ENCODE measurements at regions of chrX and their contacts with region 1.

Region 1: GRCh38 chrX:13254076-13254785 is 65.6 kb downstream of the ATXN3L start:
- DNase-seq: no peak
- H3K4me3 Mint-ChIP-seq: peak overlapping the region; percentile 3
- H3K27ac Mint-ChIP-seq: peak overlapping the region; percentile 14
- H3K4me1 Mint-ChIP-seq: peaks cover 59% of the 10 kb centered on the region
- H3K27me3 Mint-ChIP-seq: no peaks in the 10 kb centered on the region

Region 2: DNA sequence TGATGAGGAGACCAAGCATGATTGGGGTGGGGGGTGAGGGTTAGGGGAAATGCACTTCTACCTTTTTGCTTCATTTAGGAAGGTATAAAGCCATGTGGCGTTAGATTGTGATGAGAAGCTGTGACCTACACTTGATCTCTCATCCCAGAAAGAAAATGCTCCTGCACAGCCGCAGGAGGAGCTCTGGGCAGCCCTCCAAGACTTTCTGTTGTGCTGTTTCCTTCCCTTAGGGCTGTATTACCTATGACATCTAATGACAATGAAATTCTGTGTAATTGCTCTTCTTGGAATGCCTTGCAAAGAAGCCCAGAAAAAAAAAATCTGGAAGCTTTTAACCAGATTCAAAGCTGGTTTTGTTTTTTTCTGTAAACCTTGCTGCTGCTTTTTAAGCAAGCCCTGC is 449.6 kb before region 1 on chrX:
- intact Hi-C with region 1: no loop called
- DNase-seq: no peak
- H3K4me3 Mint-ChIP-seq: no peak overlapping the region
- H3K27ac Mint-ChIP-seq: no peak overlapping the region
- H3K4me1 Mint-ChIP-seq: peaks cover 17% of the 10 kb centered on the region
- H3K27me3 Mint-ChIP-seq: no peaks in the 10 kb centered on the region

Region 3: GRCh38 chrX:13123857-13124345 is 130.3 kb before region 1 on chrX:
- intact Hi-C with region 1: loop called (anchors 10 kb)
- DNase-seq: no peak
- H3K4me3 Mint-ChIP-seq: peak overlapping the region; percentile 57
- H3K27ac Mint-ChIP-seq: peak overlapping the region; percentile 86
- H3K4me1 Mint-ChIP-seq: peaks cover 42% of the 10 kb centered on the region
- H3K27me3 Mint-ChIP-seq: no peaks in the 10 kb centered on the region

Region 4: GRCh38 chrX:13151828-13152510 is 102.3 kb before region 1 on chrX:
- intact Hi-C with region 1: loop called (anchors 5 kb)
- DNase-seq: peak; percentile 34
- H3K4me3 Mint-ChIP-seq: peak overlapping the region; percentile 66
- H3K27ac Mint-ChIP-seq: peak overlapping the region; percentile 71
- H3K4me1 Mint-ChIP-seq: peaks cover 14% of the 10 kb centered on the region
- H3K27me3 Mint-ChIP-seq: no peaks in the 10 kb centered on the region

Region 5: GRCh38 chrX:13223868-13224555 is 30.2 kb before region 1 on chrX:
- intact Hi-C with region 1: no loop called
- DNase-seq: no peak
- H3K4me3 Mint-ChIP-seq: no peak overlapping the region
- H3K27ac Mint-ChIP-seq: no peak overlapping the region
- H3K4me1 Mint-ChIP-seq: peaks cover 7% of the 10 kb centered on the region
- H3K27me3 Mint-ChIP-seq: no peaks in the 10 kb centered on the region

Region 6: GRCh38 chrX:13376857-13377549 is 122.8 kb after region 1 on chrX:
- intact Hi-C with region 1: loop called (anchors 5 kb)
- DNase-seq: no peak
- H3K4me3 Mint-ChIP-seq: no peak overlapping the region
- H3K27ac Mint-ChIP-seq: peak overlapping the region; percentile 27
- H3K4me1 Mint-ChIP-seq: peaks cover 41% of the 10 kb centered on the region
- H3K27me3 Mint-ChIP-seq: no peaks in the 10 kb centered on the region

Region 7: GRCh38 chrX:13473442-13474163 is 219.4 kb after region 1 on chrX:
- intact Hi-C with region 1: loop called (anchors 5 kb)
- DNase-seq: no peak
- H3K4me3 Mint-ChIP-seq: peak overlapping the region; percentile 73
- H3K27ac Mint-ChIP-seq: peak overlapping the region; percentile 92
- H3K4me1 Mint-ChIP-seq: peaks cover 44% of the 10 kb centered on the region
- H3K27me3 Mint-ChIP-seq: no peaks in the 10 kb centered on the region